Gastrocnemius medialis (tissue), 4 donors: ENCODE measurements at regions of chr6 and their contacts with region 1.

Region 1: GRCh38 chr6:100088009-100088408 is 94.0 kb upstream of the MCHR2 start:
- DNase-seq: no peak
- ATAC-seq: peak; percentile 91 to 93
- H3K4me3 ChIP-seq: no peak overlapping the region
- H3K27ac ChIP-seq: peak overlapping the region; percentile 73 to 89 (median 80)
- H3K4me1 ChIP-seq: peaks cover 36 to 46% of the 10 kb centered on the region in 2 donors
- H3K27me3 ChIP-seq: no peaks in the 10 kb centered on the region
- CTCF ChIP-seq: no peak
- POLR2A ChIP-seq: no peak

Region 2: DNA sequence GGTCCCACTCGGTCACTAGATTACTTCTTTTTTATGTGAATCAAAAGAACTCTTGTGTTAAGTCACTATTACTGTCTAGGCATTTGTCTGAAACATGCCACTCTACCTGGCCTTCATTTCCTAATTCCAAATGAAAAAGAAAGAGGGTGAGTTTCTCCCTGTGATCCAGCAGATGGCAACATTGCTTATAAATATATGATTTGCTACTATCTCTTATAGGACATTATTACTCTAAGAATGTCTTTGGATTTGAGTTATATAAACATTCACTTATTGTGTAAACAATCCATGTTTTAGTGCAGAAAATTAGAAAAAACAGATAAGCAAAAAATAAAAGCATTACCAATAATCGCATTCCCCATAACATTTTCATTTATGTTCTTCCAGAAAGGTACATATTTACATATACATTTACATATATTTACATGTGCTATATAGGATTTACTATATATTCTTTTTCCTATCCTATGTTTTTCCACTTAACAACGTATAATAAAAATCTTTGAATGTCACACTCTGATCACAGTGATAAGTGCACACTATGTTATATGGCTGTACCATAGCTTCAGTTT is 805.4 kb before region 1 on chr6:
- in situ Hi-C with region 1: no loop called
- intact Hi-C with region 1: no loop called
- DNase-seq: no peak
- ATAC-seq: no peak
- H3K4me3 ChIP-seq: no peak overlapping the region
- H3K27ac ChIP-seq: no peak overlapping the region
- H3K4me1 ChIP-seq: no peaks in the 10 kb centered on the region
- H3K27me3 ChIP-seq: no peaks in the 10 kb centered on the region
- CTCF ChIP-seq: no peak
- POLR2A ChIP-seq: no peak

Region 3: DNA sequence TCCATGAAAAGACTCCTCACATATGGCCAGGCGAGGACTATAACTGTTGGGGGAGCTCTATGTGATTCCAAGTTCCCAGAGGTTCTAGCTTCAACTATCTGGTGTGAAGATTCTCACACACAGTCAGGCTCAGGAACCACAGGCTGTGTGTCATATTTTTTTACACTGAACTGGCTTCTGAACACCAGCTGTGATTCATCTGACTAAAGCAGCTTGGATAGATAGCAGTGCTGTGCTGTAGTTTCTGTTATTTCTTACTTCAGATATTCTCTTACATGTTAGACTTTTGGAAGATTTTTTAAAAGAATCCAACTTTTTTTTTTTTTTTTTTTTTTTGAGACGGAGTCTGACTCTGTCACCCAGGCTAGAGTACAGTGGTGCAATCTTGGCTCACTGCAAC is 46.7 kb after region 1 on chr6:
- in situ Hi-C with region 1: no loop called
- intact Hi-C with region 1: no loop called
- DNase-seq: no peak
- ATAC-seq: no peak
- H3K4me3 ChIP-seq: no peak overlapping the region
- H3K27ac ChIP-seq: no peak overlapping the region
- H3K4me1 ChIP-seq: no peaks in the 10 kb centered on the region
- H3K27me3 ChIP-seq: no peaks in the 10 kb centered on the region
- CTCF ChIP-seq: no peak
- POLR2A ChIP-seq: no peak

Region 4: DNA sequence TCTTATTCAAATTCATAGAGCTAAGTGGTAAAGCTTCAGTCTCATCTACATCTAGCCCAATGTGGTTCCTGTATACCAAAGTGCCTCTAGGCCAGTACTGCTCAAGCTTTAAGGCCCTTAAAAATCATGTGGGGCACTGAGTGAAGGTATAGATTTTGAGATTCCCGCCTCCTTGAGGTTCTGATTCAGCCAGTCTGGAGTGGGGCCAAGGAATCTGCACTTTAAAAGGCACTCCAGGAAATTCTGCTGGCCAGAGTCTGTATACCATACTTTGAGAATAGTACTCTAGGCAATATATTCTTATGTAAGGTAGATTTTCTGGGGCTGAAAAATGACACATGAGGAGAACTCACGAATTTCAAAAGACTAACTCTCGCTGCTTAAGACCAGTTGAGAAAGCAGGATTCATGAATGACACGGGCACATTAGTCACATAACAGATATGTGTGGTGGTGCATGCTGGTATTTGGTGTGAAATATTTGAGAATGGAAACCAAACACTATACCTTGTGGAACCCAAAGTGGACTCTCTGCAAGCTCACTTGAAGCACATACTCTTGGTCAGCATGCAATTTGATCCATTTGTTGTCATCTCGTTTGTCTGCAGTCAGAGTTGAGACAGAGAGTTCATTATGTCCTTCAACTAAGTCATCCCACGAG is 424.3 kb after region 1 on chr6:
- in situ Hi-C with region 1: no loop called
- intact Hi-C with region 1: loop called (anchors 5 kb)
- DNase-seq: no peak
- ATAC-seq: peak; percentile 78 to 89
- H3K4me3 ChIP-seq: no peak overlapping the region
- H3K27ac ChIP-seq: peak overlapping the region in 1 of 4 donors; percentile 54
- H3K4me1 ChIP-seq: no peaks in the 10 kb centered on the region
- H3K27me3 ChIP-seq: no peaks in the 10 kb centered on the region
- CTCF ChIP-seq: no peak
- POLR2A ChIP-seq: no peak